Heart left ventricle (tissue), 16 donors: ENCODE measurements at regions of chr4 and their contacts with region 1.

Region 1: GRCh38 chr4:76485450-76485849 is 50.4 kb downstream of the SHROOM3 start:
- DNase-seq: no peak
- ATAC-seq: peak in 1 of 4 donors; percentile 48
- H3K4me3 ChIP-seq: no peak overlapping the region
- H3K27ac ChIP-seq: no peak overlapping the region
- H3K4me1 ChIP-seq: peaks cover 0 to 7% (median 0%) of the 10 kb centered on the region in 12 donors
- H3K27me3 ChIP-seq: no peaks in the 10 kb centered on the region
- CTCF ChIP-seq: no peak
- POLR2A ChIP-seq: no peak

Region 2: GRCh38 chr4:76459291-76459723 is 26.1 kb before region 1 on chr4:
- intact Hi-C with region 1: loop called in 1 of 10 experiments (anchors 1 kb)
- DNase-seq: no peak
- ATAC-seq: peak; percentile 63 to 83 (median 72)
- H3K4me3 ChIP-seq: peak overlapping the region in 3 of 12 donors; percentile 28 to 29 (median 28)
- H3K27ac ChIP-seq: peak overlapping the region in 9 of 12 donors; percentile 6 to 79 (median 67)
- H3K4me1 ChIP-seq: peaks cover 0 to 13% (median 1%) of the 10 kb centered on the region in 12 donors
- H3K27me3 ChIP-seq: no peaks in the 10 kb centered on the region
- CTCF ChIP-seq: peak in 1 of 12 donors; percentile 4
- POLR2A ChIP-seq: no peak